Activated B cell treated with CpG ODN at 0.5 μM for 24 hours (primary cell): ENCODE measurements at regions of chr9 and their contacts with region 1.

Region 1: DNA sequence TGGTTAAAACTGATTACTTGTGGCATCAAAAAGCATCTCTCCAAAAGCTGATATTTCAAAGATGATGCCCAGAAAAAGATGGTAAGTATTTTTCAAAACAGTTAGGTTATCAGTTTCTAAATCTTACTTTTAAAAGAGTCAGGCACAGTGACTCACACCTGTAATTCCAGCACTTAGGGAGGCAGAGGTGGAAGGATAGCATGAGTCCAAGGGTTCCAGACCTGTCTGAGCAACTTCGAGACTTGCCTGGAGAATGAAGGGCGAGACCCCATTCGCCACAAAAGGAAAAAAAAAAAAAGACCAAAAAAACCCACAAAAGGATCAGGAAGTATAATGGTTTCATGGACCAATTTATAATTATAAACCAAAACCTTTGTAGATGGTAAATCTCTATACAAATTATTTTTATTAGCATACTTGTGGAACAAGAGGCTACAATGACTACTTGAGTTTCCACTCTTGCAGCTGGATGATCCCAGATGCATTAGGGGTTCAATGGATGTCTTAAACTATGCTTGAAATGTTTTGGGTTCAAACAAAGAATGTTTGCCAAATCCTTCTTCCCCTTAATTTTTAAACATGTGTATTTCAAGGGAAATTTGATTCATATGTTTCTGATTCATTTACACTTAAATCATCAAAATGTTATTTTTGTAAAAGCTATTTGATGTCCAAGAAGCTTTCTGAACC is 96.1 kb downstream of the ADAMTSL1 start:
- DNase-seq: no peak
- ATAC-seq: no peak
- H3K4me3 Mint-ChIP-seq: no peak overlapping the region
- H3K27ac Mint-ChIP-seq: no peak overlapping the region
- H3K4me1 Mint-ChIP-seq: no peaks in the 10 kb centered on the region
- H3K27me3 Mint-ChIP-seq: no peaks in the 10 kb centered on the region
- CTCF ChIP-seq: no peak

Region 2: GRCh38 chr9:18516965-18517364 is 53.1 kb before region 1 on chr9:
- CTCF ChIA-PET with region 1: no interaction called
- POLR2A ChIA-PET with region 1: no interaction called
- intact Hi-C with region 1: loop called (anchors 10 kb)
- DNase-seq: no peak
- ATAC-seq: no peak
- H3K4me3 Mint-ChIP-seq: no peak overlapping the region
- H3K27ac Mint-ChIP-seq: no peak overlapping the region
- H3K4me1 Mint-ChIP-seq: no peaks in the 10 kb centered on the region
- H3K27me3 Mint-ChIP-seq: no peaks in the 10 kb centered on the region
- CTCF ChIP-seq: no peak

Region 3: DNA sequence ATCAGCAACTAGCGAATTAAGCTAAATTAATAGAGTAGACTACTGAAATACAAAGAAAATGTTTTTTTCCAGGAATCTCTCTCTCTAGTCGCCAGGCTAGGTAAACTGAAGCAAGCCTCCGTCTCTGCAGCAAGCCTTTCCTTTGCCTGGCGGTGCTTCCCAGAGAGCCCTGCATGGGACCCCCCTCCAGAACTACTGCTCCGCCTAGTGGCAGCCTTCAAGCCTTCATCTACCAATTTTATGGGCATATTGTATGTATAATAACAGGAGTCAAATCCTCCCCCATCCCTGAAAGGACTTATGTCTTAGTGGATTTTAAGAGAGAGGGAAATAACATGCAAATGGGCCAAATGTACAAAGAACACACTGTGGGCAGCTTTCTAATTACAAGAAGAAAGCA is 221.0 kb after region 1 on chr9:
- CTCF ChIA-PET with region 1: no interaction called
- POLR2A ChIA-PET with region 1: no interaction called
- intact Hi-C with region 1: no loop called
- DNase-seq: no peak
- ATAC-seq: no peak
- H3K4me3 Mint-ChIP-seq: no peak overlapping the region
- H3K27ac Mint-ChIP-seq: peak overlapping the region; percentile 13
- H3K4me1 Mint-ChIP-seq: no peaks in the 10 kb centered on the region
- H3K27me3 Mint-ChIP-seq: no peaks in the 10 kb centered on the region
- CTCF ChIP-seq: no peak

Region 4: DNA sequence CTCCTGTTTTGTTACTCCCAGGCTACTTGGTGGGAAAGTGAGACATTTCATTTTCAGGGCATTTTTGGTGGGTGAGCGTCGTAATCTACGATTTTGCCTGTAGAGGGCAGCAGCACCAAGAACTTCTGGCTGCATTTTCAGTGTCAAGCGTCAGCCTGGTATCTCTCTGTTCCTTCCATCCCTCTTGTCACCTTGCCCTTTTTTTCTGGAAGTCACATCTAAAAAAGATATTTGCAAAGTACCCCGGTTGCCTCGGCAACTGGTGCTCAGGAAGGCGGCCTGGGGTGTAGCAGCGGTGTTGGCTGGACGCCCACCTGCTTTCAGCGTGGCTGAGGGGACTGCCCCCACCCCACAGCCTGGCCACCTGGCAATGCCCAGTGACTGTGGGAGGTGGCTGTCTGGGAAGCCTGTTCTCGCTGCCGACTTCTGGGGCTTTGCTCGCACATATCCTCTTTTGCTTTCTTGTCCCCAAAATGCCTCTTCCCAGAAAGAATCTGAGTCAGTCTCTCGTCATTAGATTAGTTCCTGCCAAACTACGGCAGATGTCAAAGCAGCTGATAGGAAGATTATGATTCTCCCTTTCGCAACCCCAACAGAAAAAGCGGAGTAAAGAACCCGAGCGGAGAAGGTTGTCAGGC is 923.2 kb after region 1 on chr9:
- CTCF ChIA-PET with region 1: no interaction called
- POLR2A ChIA-PET with region 1: no interaction called
- intact Hi-C with region 1: no loop called
- DNase-seq: no peak
- ATAC-seq: peak; percentile 49
- H3K4me3 Mint-ChIP-seq: peak overlapping the region; percentile 16
- H3K27ac Mint-ChIP-seq: no peak overlapping the region
- H3K4me1 Mint-ChIP-seq: peaks cover 8% of the 10 kb centered on the region
- H3K27me3 Mint-ChIP-seq: peaks cover 10% of the 10 kb centered on the region
- CTCF ChIP-seq: no peak